ENCODE measurements at regions of chr1 and their contacts with region 1.

Region 1: DNA sequence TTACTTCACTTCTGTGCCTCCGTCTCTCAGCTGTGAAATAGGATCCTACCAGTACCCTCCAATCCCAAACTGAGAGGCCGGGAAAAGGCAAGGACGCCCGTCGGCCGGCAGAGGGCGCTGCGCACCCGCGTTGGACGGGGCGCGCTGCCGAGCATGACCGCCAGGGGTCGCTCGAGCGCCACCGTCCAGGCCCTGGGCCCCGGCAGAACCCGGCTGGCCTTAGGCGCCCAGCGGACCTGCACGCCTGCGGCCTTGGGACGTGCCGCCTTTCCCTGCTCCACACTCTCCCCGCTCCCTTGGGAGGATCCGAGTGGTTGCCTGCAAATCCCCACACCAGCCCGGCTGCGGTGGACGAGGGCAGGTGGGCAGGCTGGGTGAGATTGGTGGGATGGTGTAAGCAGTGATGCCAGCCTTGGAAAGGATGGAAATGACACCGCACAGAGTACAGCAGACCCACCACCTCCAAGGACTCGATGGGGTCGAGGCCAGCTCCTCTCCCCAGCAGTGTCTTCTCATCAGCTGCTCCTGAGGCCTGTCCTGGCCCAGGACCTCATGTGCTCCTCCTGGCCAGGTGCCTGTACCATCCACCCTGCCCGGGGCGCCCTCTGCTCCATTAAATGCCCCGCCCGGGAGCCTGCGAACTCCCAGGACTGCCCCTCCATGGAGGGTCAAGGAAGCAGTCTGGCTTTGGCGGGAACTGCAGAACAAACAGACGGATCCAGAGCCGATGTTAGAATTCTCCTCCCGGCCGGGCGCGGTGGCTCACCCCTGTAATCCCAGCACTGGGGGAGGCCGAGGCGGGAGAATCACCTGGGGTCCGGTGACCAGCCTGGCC is 47.4 kb upstream of the LBR start:
- DNase-seq: peak; percentile 64 to 74
- ATAC-seq: peak; percentile 82 to 91
- H3K4me3 ChIP-seq: 0 out of 3 replicates have a peak overlapping the region, but pooled peaks have one; percentile 3
- H3K27ac ChIP-seq: peak overlapping the region; percentile 68 to 78
- H3K4me1 ChIP-seq: peaks cover 8% of the 10 kb centered on the region; the same call in 2 of the 3 replicates
- CTCF ChIP-seq: peak; percentile 100
- EP300 ChIP-seq: no peak
- POLR2A ChIP-seq: no peak
- RAD21 ChIP-seq: peak; percentile 100

Region 2: GRCh38 chr1:225250432-225250831 is 224.8 kb before region 1 on chr1:
- CTCF ChIA-PET with region 1: no interaction called
- POLR2A ChIA-PET with region 1: no interaction called
- DNase-seq: no peak
- ATAC-seq: no peak
- H3K4me3 ChIP-seq: no peak overlapping the region
- H3K27ac ChIP-seq: no peak overlapping the region
- H3K4me1 ChIP-seq: no peaks in the 10 kb centered on the region
- CTCF ChIP-seq: no peak
- EP300 ChIP-seq: no peak
- POLR2A ChIP-seq: no peak
- RAD21 ChIP-seq: no peak

Region 3: GRCh38 chr1:225498549-225499136 is 23.4 kb after region 1 on chr1:
- CTCF ChIA-PET with region 1: interaction called, 117 read pairs
- POLR2A ChIA-PET with region 1: no interaction called
- DNase-seq: no peak
- ATAC-seq: no peak
- H3K4me3 ChIP-seq: no peak overlapping the region
- H3K27ac ChIP-seq: no peak overlapping the region
- H3K4me1 ChIP-seq: 0 out of 3 replicates have a peak, but pooled peaks cover 4% of the 10 kb centered on the region
- CTCF ChIP-seq: no peak
- EP300 ChIP-seq: no peak
- POLR2A ChIP-seq: no peak
- RAD21 ChIP-seq: no peak

Region 4: DNA sequence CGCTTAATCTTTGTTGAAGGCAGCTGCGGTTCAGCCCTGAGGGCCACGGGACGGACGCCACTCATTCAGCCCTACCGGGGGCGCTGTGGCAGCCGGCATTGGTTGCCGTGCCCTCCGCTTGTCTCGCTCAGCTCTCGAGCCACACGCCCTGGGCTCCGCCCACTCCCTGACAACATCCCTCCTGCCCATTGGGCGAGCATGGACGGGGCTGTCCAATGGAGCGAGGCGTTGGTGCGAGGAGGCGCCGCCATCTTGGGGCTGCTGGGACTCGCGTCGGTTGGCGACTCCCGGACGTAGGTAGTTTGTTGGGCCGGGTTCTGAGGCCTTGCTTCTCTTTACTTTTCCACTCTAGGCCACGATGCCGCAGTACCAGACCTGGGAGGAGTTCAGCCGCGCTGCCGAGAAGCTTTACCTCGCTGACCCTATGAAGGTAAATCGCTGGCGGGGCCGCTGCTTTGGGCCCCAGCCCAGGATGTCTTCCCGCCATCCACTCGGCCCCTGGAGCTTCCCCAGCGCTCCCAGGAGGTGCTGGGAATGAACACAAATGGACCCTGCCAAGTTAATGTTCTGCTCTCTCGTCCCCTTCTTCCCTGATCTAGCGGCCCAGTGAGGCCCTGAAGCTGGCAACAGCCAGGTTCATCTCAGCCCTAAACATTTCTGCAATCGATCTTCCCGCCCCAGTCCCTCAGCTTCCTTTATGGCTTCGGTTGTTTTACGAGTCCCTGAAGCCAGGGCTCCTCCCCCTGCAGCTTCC is 302.6 kb after region 1 on chr1 and contains the start of gene SRP9:
- CTCF ChIA-PET with region 1: interaction called, 429 read pairs
- POLR2A ChIA-PET with region 1: interaction called, 3 read pairs
- DNase-seq: peak; percentile 92 to 98
- ATAC-seq: peak; percentile 99 to 100
- H3K4me3 ChIP-seq: peak within 1 kb of the TSS; percentile 85
- H3K27ac ChIP-seq: peak within 1 kb of the TSS; percentile 93 to 97
- H3K4me1 ChIP-seq: peaks cover 46% of the 10 kb centered on the region
- CTCF ChIP-seq: peak; percentile 82
- EP300 ChIP-seq: no peak
- POLR2A ChIP-seq: no peak; the same call in 1 of the 2 replicates
- RAD21 ChIP-seq: peak; percentile 63 to 71
- polyA plus RNA-seq, gene SRP9: 512 and 629 TPM in 2 replicates

Region 5: DNA sequence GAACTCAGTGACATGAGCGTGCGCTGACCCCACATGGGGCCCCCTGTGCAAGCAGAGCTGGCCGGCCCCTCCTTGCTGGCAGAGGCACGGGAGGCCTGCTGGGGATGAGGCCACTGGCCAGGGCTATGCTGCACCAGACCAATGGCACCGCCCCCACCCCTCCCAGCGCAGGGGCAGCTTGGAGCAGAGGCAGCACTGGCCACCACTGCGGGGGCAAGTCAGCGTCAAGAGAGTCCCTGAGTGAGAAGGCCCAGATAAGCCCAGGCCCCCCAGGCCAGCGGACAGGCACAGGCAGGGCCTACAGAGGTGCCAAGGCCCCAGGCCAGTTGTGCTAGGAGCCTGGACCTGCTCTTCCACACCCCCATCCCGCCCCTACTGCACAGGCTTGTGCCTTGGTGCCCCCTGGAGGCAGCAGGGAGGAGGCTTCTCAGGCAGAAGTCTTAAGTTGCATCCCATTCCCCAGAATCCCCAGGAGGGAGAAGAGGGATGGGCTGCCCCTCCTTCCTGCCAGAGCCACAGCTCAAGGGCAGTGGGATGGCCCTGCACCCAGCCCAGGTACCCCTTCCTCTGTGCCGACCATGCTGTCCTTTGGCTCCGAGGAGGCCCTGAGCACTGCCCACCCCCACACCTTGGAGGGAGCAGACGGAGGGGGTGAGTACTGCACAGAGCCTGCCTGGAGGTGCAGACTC is 370.5 kb after region 1 on chr1:
- CTCF ChIA-PET with region 1: interaction called, 69 read pairs
- POLR2A ChIA-PET with region 1: no interaction called
- DNase-seq: peak; percentile 72 to 88
- ATAC-seq: peak; percentile 80 to 88
- H3K4me3 ChIP-seq: no peak overlapping the region
- H3K27ac ChIP-seq: peak overlapping the region in 1 of 2 experiments; percentile 60; a peak in 3 of 6 replicates
- H3K4me1 ChIP-seq: peaks cover 6% of the 10 kb centered on the region; the same call in 1 of the 3 replicates
- CTCF ChIP-seq: peak; percentile 66
- EP300 ChIP-seq: no peak
- POLR2A ChIP-seq: no peak
- RAD21 ChIP-seq: peak; percentile 85 to 93

Region 6: DNA sequence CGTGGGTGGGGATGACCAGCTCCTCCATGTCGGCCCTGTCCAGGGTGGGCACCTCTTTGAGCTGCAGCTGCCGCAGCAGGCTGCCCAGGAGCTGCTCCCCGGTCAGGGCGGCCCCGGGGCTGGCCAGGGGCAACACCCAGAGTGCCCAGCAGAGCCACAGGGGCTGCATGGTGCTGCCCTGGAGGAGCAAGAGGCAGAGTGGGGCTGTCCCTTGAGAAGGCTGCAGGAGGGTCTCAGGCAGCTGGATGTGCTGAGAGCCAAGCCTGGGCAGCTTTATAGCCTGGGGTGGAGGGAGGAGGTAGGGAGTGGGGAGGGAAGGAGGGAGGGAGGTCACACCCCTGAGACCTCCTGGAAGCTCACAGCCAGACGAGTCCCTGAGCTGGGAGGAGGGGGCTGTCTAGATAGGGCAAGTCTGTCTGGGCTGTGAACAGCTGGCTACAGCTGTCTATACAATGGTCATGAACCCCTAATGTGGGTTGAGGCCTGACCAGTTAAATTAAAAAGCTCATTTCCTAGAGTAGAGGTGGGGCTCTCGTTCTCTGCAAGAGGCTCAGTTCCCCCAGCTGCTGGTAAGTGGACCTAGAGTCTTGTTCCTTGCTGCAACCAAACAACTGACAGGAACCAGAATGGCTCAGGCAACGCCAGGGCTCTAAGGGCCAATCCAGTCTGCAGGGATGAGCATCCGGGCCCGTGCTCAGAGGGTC is 413.8 kb after region 1 on chr1 and contains the start of gene LEFTY1:
- CTCF ChIA-PET with region 1: interaction called, 10 read pairs
- POLR2A ChIA-PET with region 1: no interaction called
- DNase-seq: no peak
- ATAC-seq: peak in 1 of 2 experiments; percentile 32; a peak in 3 of 6 replicates
- H3K4me3 ChIP-seq: no peak within 1 kb of the TSS
- H3K27ac ChIP-seq: peak within 1 kb of the TSS in 1 of 2 experiments; percentile 12; a peak in 2 of 6 replicates
- H3K4me1 ChIP-seq: peaks cover 39% of the 10 kb centered on the region
- CTCF ChIP-seq: no peak
- EP300 ChIP-seq: no peak
- POLR2A ChIP-seq: no peak
- RAD21 ChIP-seq: no peak
- polyA plus RNA-seq, gene LEFTY1: 0.93 and 1.00 TPM in 2 replicates

Region 7: GRCh38 chr1:225962440-225962975 is 487.3 kb after region 1 on chr1:
- CTCF ChIA-PET with region 1: interaction called, 227 read pairs
- POLR2A ChIA-PET with region 1: no interaction called
- DNase-seq: peak; percentile 64 to 71
- ATAC-seq: peak; percentile 98 to 100
- H3K4me3 ChIP-seq: peak overlapping the region; percentile 26; the same call in 2 of the 3 replicates
- H3K27ac ChIP-seq: peak overlapping the region in 1 of 2 experiments; percentile 45; a peak in 2 of 6 replicates
- H3K4me1 ChIP-seq: no peaks in the 10 kb centered on the region
- CTCF ChIP-seq: peak; percentile 81
- EP300 ChIP-seq: no peak
- POLR2A ChIP-seq: no peak
- RAD21 ChIP-seq: peak; percentile 59 to 62

Measured in A549 (cell line).